ENCODE measurements at regions of chr7 and their contacts with region 1.

Region 1: DNA sequence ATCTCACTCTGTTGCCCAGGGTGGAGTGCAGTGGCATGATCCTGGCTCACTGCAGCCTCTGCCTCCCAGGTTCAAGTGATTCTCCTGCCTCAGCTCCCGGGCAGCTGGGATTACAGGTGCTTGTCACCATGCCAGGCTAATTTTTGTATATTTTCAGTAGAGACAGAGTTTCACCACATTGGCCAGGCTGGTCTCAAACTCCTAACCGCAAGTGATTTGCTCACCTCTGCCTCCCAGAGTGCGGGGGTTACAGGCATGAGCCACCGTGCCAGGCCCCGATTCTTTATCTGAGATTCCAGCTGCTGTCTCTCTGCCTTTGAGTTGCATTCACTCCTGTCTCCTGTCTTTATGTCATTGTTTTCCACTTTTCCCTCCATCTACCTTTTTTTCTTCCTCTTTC is 168.7 kb downstream of the TMEM178B start:
- DNase-seq: no peak
- H3K4me3 ChIP-seq: no peak overlapping the region
- H3K27ac ChIP-seq: no peak overlapping the region
- H3K4me1 ChIP-seq: no peaks in the 10 kb centered on the region
- H3K27me3 ChIP-seq: no peaks in the 10 kb centered on the region
- CTCF ChIP-seq: no peak
- POLR2A ChIP-seq: no peak

Region 2: GRCh38 chr7:141280100-141280499 is 37.5 kb after region 1 on chr7:
- intact Hi-C with region 1: no loop called
- DNase-seq: no peak
- H3K4me3 ChIP-seq: no peak overlapping the region
- H3K27ac ChIP-seq: no peak overlapping the region
- H3K4me1 ChIP-seq: peaks cover 0 to 19% (median 0%) of the 10 kb centered on the region in 3 donors
- H3K27me3 ChIP-seq: no peaks in the 10 kb centered on the region
- CTCF ChIP-seq: no peak
- POLR2A ChIP-seq: no peak

Region 3: DNA sequence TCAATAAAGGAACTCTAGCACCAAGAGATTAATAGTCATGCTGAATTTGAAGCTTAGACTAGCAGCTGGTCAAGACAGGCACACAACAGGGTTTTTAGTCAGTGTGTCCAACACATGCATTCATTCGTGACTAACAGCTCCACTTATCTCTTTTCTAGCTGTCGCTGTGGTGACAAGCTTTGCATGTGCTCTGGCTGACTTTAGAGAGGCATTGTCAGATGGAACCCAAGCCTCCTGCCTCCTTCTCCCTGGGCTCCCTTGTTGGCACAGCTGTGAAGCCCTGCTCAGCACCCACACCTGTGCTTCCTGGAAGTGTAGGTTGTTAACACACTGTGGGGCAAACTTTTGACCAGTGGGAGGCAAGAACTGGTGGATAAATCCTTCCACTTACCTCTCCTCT is 298.8 kb after region 1 on chr7:
- intact Hi-C with region 1: loop called (anchors 10 kb)
- DNase-seq: no peak
- H3K4me3 ChIP-seq: no peak overlapping the region
- H3K27ac ChIP-seq: no peak overlapping the region
- H3K4me1 ChIP-seq: no peaks in the 10 kb centered on the region
- H3K27me3 ChIP-seq: peaks cover 0 to 5% (median 0%) of the 10 kb centered on the region in 4 donors
- CTCF ChIP-seq: no peak
- POLR2A ChIP-seq: no peak